IMR-90 (cell line): ENCODE measurements at regions of chr14 and their contacts with region 1.

Region 1: DNA sequence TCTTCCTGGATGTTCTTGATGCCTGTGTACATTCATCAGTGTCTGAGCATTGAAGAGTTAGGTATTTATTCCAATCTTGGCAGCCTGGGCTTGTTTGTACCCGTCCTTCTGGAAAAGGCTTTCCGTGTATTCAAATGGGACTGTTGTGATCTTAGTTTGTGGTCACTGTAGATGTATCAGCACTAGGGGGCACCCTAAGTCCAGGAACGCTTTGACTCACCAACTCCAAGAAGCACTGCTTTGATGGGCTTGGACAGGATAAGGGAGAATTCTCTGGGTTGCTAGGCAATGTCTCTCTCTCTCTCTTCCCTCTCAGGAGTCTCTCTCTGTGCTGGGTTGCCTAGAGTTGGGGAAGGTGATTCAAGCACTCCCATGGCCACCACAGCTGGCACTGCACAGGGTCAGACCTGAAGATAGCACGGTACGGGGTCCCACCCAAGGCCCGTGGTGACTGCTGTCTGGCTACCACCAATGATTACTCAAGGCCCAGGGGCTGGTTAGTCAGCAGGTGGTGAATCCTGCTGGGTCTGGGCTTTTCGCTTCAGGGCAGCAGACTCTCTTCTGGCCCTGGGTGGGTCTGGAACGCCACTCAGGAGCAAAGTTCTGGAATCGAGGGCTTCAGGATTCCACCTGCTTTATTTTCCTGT is 211.1 kb upstream of the RGS6 start:
- DNase-seq: peak; percentile 85
- ATAC-seq: peak; percentile 92
- H3K4me3 ChIP-seq: no peak overlapping the region
- H3K27ac ChIP-seq: no peak overlapping the region
- H3K4me1 ChIP-seq: peaks cover 13% of the 10 kb centered on the region
- H3K27me3 ChIP-seq: no peaks in the 10 kb centered on the region
- CTCF ChIP-seq: peak; percentile 84
- POLR2A ChIP-seq: 0 out of 2 replicates have a peak, but pooled peaks have one; percentile 42
- RAD21 ChIP-seq: peak; percentile 89

Region 2: GRCh38 chr14:72420725-72421474 is 699.8 kb after region 1 on chr14:
- CTCF ChIA-PET with region 1: interaction called, 3 read pairs
- POLR2A ChIA-PET with region 1: no interaction called
- dilution Hi-C with region 1: no loop called
- in situ Hi-C with region 1: no loop called
- intact Hi-C with region 1: loop called (anchors 2 kb)
- DNase-seq: peak; percentile 49
- ATAC-seq: peak; percentile 92
- H3K4me3 ChIP-seq: no peak overlapping the region
- H3K27ac ChIP-seq: no peak overlapping the region
- H3K4me1 ChIP-seq: no peaks in the 10 kb centered on the region
- H3K27me3 ChIP-seq: peaks cover 5% of the 10 kb centered on the region
- CTCF ChIP-seq: peak; percentile 78
- POLR2A ChIP-seq: no peak
- RAD21 ChIP-seq: peak; percentile 78